ENCODE measurements at regions of chr11 and their contacts with region 1.

Region 1: DNA sequence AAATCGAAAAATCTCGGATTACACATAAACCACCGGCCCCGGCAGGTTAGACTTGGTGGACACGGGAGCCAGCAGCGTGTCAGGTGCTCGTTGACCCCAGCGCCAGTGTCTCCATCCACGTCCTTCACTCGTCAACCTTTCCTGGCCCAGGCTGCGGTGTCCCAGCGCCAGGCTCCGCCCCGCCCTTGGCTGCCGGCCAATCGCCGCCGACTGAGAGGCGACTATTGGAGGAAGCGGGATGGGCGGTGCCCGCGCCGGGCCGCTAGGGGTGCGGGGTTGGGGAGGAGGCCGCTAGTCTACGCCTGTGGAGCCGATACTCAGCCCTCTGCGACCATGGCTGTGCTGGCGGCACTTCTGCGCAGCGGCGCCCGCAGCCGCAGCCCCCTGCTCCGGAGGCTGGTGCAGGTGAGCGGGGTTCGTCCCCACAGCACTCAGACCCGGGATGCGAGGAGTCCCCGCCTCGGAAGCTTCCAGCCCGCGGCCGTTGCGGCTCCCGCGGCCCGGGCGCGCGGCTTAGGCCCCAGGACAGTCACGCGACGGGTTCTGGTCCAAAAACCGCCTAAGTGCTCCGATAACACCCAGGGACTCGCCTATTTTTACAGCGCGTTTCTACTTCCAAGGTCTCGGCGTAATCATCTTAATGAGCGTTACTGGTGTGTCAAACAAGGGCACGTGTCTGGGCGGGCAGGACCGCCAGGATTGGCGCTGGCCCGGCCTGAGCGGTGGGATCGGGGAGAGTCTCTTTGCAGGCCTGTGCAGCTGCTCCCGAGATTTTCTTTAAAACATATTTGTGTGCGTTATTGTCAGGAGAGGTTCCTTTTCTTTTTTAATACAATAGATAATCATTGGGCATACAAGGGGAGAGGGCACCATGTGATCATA is at the start of gene ACAT1:
- DNase-seq: peak; percentile 91 to 98 (median 94)
- ATAC-seq: peak; percentile 100
- H3K4me3 ChIP-seq: peak within 1 kb of the TSS; percentile 88
- H3K4me3 Mint-ChIP-seq: peak within 1 kb of the TSS; percentile 81 to 97 (median 94)
- H3K27ac ChIP-seq: peak within 1 kb of the TSS; percentile 66
- H3K27ac Mint-ChIP-seq: peak within 1 kb of the TSS; percentile 61 to 93 (median 85)
- H3K4me1 ChIP-seq: peaks cover 16 to 20% of the 10 kb centered on the region in 2 donors
- H3K4me1 Mint-ChIP-seq: peaks cover 35 to 49% (median 41%) of the 10 kb centered on the region in 7 donors
- H3K27me3 ChIP-seq: no peaks in the 10 kb centered on the region
- H3K27me3 Mint-ChIP-seq: no peaks in the 10 kb centered on the region
- total RNA-seq, gene ACAT1: 13.0 to 40.2 (median 17.9) TPM

Region 2: GRCh38 chr11:108093128-108093904 is 28.2 kb before region 1 on chr11:
- CTCF ChIA-PET with region 1: interaction called, 12 read pairs
- POLR2A ChIA-PET with region 1: no interaction called
- intact Hi-C with region 1: no loop called
- DNase-seq: no peak
- ATAC-seq: no peak
- H3K4me3 ChIP-seq: no peak overlapping the region
- H3K4me3 Mint-ChIP-seq: no peak overlapping the region
- H3K27ac ChIP-seq: no peak overlapping the region
- H3K27ac Mint-ChIP-seq: peak overlapping the region in 5 of 9 donors; percentile 33 to 72 (median 44)
- H3K4me1 ChIP-seq: no peaks in the 10 kb centered on the region
- H3K4me1 Mint-ChIP-seq: peaks cover 0 to 7% (median 0%) of the 10 kb centered on the region in 7 donors
- H3K27me3 ChIP-seq: no peaks in the 10 kb centered on the region
- H3K27me3 Mint-ChIP-seq: no peaks in the 10 kb centered on the region

Region 3: DNA sequence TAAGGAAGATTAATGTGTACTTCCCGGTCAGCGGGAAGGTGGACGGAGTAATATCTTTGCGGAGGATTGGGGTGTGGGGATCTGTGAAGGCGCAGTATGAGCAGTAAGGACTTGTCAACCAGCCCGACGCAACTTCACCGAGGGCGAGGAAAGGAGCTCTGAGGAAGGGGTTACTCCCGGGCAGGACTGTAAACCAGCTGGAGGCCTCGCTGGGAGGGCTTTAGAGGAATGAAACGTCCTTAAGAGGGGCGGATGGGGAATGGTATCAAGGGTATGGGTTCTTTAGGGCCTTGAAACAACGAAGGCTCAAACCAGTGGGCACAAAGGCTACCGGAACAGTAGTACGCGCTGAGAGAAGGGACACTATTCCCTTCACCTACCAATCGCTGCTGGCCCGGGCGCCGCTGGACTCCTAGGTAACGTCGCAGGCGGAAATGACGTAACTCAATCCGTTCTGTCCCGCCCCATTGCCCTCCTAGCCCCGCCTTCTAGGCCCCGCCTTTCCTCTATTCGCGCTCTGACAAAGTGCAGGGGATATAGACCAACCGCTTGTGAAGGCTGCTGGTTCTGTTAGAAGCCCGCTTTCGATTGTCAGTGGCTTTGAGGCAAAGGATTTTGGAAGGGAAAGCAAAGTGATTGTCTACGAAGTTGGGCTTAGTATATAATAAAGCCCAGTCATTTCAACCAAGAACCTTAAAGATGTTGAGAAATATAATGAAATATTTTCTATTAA is 345.7 kb after region 1 on chr11 and contains the start of gene C11orf65:
- CTCF ChIA-PET with region 1: no interaction called
- POLR2A ChIA-PET with region 1: no interaction called
- intact Hi-C with region 1: loop called (anchors 1 to 2 kb)
- DNase-seq: peak; percentile 88 to 97 (median 94)
- ATAC-seq: peak; percentile 98
- H3K4me3 ChIP-seq: peak within 1 kb of the TSS; percentile 81
- H3K4me3 Mint-ChIP-seq: peak within 1 kb of the TSS; percentile 93 to 100 (median 98)
- H3K27ac ChIP-seq: peak within 1 kb of the TSS; percentile 93
- H3K27ac Mint-ChIP-seq: peak within 1 kb of the TSS; percentile 98 to 100 (median 100)
- H3K4me1 ChIP-seq: peaks cover 3 to 5% of the 10 kb centered on the region in 2 donors
- H3K4me1 Mint-ChIP-seq: peaks cover 0 to 27% (median 17%) of the 10 kb centered on the region in 7 donors
- H3K27me3 ChIP-seq: no peaks in the 10 kb centered on the region
- H3K27me3 Mint-ChIP-seq: no peaks in the 10 kb centered on the region
- total RNA-seq, gene C11orf65: 0.27 to 1.5 (median 0.51) TPM

Region 4: DNA sequence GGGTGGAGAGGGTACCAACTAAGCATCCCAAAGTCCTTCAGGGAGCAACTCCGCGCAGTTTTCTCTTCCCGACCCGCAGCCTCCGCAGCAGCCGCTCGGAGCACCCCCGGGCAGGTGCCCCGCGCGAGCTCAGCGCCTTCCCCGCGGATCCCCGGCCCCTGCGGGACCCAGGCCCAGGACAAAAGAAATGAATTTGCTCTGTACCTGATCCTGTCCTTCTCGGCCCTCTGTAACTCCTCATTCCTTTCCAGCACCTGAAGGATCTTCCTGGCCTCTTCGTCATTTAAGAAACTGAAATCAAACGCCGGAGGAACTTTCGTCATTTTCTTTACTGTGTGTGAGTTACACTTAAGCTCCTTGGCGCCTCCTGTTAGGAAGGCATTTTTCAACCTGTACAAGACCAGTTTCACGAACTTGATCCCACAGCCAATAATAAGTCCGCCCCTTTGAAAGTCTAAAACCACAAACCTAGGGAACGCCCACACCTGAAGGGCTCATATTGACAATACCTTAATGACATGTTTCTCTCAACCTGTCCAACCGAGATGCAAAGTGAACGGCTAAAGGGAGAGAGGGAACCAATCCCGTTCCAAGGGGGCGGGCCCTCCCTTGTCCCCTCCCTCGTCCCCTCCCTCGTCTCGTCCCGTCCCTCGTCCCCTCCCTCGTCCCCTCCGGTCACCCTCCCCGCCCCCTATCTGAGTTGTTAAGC is 471.9 kb after region 1 on chr11 and contains the start of gene EXPH5:
- CTCF ChIA-PET with region 1: no interaction called
- POLR2A ChIA-PET with region 1: no interaction called
- intact Hi-C with region 1: loop called (anchors 1 to 2 kb)
- DNase-seq: peak; percentile 62 to 89 (median 87)
- ATAC-seq: peak; percentile 97
- H3K4me3 ChIP-seq: peak within 1 kb of the TSS; percentile 75
- H3K4me3 Mint-ChIP-seq: peak within 1 kb of the TSS; percentile 90 to 100 (median 97)
- H3K27ac ChIP-seq: peak within 1 kb of the TSS; percentile 81
- H3K27ac Mint-ChIP-seq: peak within 1 kb of the TSS; percentile 79 to 98 (median 95)
- H3K4me1 ChIP-seq: peaks cover 0 to 13% of the 10 kb centered on the region in 2 donors
- H3K4me1 Mint-ChIP-seq: peaks cover 12 to 27% (median 22%) of the 10 kb centered on the region in 7 donors
- H3K27me3 ChIP-seq: no peaks in the 10 kb centered on the region
- H3K27me3 Mint-ChIP-seq: peaks cover 0 to 60% (median 0%) of the 10 kb centered on the region in 5 donors
- total RNA-seq, gene EXPH5: 1.9 to 8.3 (median 5.9) TPM

Region 5: DNA sequence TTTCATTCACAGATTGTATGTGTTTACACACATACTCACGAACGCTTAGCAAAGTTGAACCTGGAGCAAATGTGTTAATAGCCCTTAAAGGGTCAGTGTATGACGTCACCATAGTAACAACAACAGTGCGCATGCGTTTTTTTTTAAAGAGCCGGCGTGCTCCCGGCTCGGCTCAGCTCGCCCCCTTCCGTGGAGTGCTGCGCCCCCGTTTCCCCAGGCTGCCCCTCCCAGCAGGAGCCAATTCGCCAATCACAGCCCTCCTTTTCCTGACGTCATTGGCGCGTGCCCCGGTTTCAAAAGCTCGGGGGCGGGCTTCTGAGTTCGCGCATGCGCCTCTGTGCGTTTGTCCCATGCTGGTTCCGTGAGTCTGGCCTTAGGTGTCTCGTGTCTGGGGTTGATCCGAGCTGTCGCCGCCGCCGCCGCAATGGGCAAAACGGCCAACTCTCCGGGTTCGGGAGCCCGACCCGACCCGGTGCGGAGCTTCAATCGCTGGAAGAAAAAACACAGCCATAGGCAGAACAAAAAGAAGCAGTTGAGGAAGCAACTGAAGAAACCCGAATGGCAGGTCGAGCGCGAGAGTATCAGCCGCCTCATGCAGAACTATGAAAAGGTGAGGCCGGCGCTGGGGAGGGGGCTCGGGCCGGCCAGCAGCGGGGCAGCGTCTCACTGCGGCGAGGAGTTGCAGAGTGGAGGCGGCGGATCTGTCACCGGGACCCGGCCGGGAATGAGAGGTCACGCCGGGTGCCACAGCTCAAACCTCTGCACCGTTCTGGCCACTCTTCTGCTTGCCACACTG is 543.4 kb after region 1 on chr11 and contains the start of gene DDX10:
- CTCF ChIA-PET with region 1: interaction called, 3 read pairs
- POLR2A ChIA-PET with region 1: interaction called, 3 read pairs
- intact Hi-C with region 1: loop called (anchors 1 kb)
- DNase-seq: peak; percentile 95 to 99 (median 98)
- ATAC-seq: peak; percentile 99
- H3K4me3 ChIP-seq: peak within 1 kb of the TSS; percentile 80
- H3K4me3 Mint-ChIP-seq: peak within 1 kb of the TSS; percentile 91 to 100 (median 100)
- H3K27ac ChIP-seq: peak within 1 kb of the TSS; percentile 77
- H3K27ac Mint-ChIP-seq: peak within 1 kb of the TSS; percentile 79 to 100 (median 97)
- H3K4me1 ChIP-seq: peaks cover 18 to 22% of the 10 kb centered on the region in 2 donors
- H3K4me1 Mint-ChIP-seq: peaks cover 24 to 56% (median 47%) of the 10 kb centered on the region in 7 donors
- H3K27me3 ChIP-seq: no peaks in the 10 kb centered on the region
- H3K27me3 Mint-ChIP-seq: peaks cover 0 to 9% (median 0%) of the 10 kb centered on the region in 5 donors
- total RNA-seq, gene DDX10: 16.7 to 34.6 (median 22.8) TPM